CD8-positive, alpha-beta T cell (primary cell): ENCODE measurements at regions of chr21 and their contacts with region 1.

Region 1: GRCh38 chr21:15483138-15483780 is 246.5 kb upstream of the USP25 start:
- DNase-seq: peak; percentile 46 to 87 (median 79)
- ATAC-seq: peak; percentile 99
- H3K4me3 ChIP-seq: no peak overlapping the region
- H3K4me3 Mint-ChIP-seq: no peak overlapping the region
- H3K27ac ChIP-seq: no peak overlapping the region
- H3K27ac Mint-ChIP-seq: no peak overlapping the region
- H3K4me1 ChIP-seq: no peaks in the 10 kb centered on the region
- H3K4me1 Mint-ChIP-seq: peaks cover 15% of the 10 kb centered on the region
- H3K27me3 ChIP-seq: no peaks in the 10 kb centered on the region
- H3K27me3 Mint-ChIP-seq: no peaks in the 10 kb centered on the region
- CTCF ChIP-seq: peak; percentile 89

Region 2: DNA sequence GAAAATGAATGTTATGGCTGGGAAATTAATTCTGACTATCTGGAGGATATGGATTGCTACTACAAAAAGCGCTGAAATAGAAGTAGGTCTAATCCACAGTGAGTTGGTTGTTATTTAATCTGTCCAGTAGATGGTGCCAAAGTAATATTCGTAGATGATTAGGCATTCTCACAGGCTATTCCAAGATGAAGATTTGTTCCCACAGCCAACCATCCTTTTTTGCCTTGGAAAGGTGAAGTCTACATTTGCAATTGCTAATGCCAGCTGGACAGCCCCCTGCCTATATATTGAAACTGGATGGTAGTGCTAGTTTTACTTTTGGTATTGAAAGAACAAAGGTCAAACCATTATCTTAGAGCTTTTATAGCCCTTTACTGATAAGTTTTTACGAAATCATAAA is 1223.5 kb before region 1 on chr21:
- CTCF ChIA-PET with region 1: no interaction called
- POLR2A ChIA-PET with region 1: no interaction called
- intact Hi-C with region 1: loop called (anchors 5 kb)
- DNase-seq: peak in 2 of 9 experiments; percentile 39 to 55
- ATAC-seq: peak; percentile 54
- H3K4me3 ChIP-seq: no peak overlapping the region
- H3K4me3 Mint-ChIP-seq: no peak overlapping the region
- H3K27ac ChIP-seq: no peak overlapping the region
- H3K27ac Mint-ChIP-seq: no peak overlapping the region
- H3K4me1 ChIP-seq: no peaks in the 10 kb centered on the region
- H3K4me1 Mint-ChIP-seq: no peaks in the 10 kb centered on the region
- H3K27me3 ChIP-seq: no peaks in the 10 kb centered on the region
- H3K27me3 Mint-ChIP-seq: no peaks in the 10 kb centered on the region
- CTCF ChIP-seq: peak; percentile 62

Region 3: GRCh38 chr21:14403681-14404318 is 1079.5 kb before region 1 on chr21:
- CTCF ChIA-PET with region 1: no interaction called
- POLR2A ChIA-PET with region 1: no interaction called
- intact Hi-C with region 1: loop called (anchors 1 kb)
- DNase-seq: peak in 2 of 9 experiments; percentile 54 to 68
- ATAC-seq: peak; percentile 74
- H3K4me3 ChIP-seq: no peak overlapping the region
- H3K4me3 Mint-ChIP-seq: no peak overlapping the region
- H3K27ac ChIP-seq: no peak overlapping the region
- H3K27ac Mint-ChIP-seq: no peak overlapping the region
- H3K4me1 ChIP-seq: no peaks in the 10 kb centered on the region
- H3K4me1 Mint-ChIP-seq: no peaks in the 10 kb centered on the region
- H3K27me3 ChIP-seq: no peaks in the 10 kb centered on the region
- H3K27me3 Mint-ChIP-seq: no peaks in the 10 kb centered on the region
- CTCF ChIP-seq: peak; percentile 75

Region 4: GRCh38 chr21:14864211-14865021 is 618.8 kb before region 1 on chr21:
- CTCF ChIA-PET with region 1: interaction called, 5 read pairs
- POLR2A ChIA-PET with region 1: interaction called, 3 read pairs
- intact Hi-C with region 1: loop called (anchors 1 to 5 kb)
- DNase-seq: peak in 5 of 9 experiments; percentile 17 to 34 (median 24)
- ATAC-seq: no peak
- H3K4me3 ChIP-seq: no peak overlapping the region
- H3K4me3 Mint-ChIP-seq: no peak overlapping the region
- H3K27ac ChIP-seq: no peak overlapping the region
- H3K27ac Mint-ChIP-seq: no peak overlapping the region
- H3K4me1 ChIP-seq: no peaks in the 10 kb centered on the region
- H3K4me1 Mint-ChIP-seq: peaks cover 8% of the 10 kb centered on the region
- H3K27me3 ChIP-seq: no peaks in the 10 kb centered on the region
- H3K27me3 Mint-ChIP-seq: no peaks in the 10 kb centered on the region
- CTCF ChIP-seq: no peak

Region 5: DNA sequence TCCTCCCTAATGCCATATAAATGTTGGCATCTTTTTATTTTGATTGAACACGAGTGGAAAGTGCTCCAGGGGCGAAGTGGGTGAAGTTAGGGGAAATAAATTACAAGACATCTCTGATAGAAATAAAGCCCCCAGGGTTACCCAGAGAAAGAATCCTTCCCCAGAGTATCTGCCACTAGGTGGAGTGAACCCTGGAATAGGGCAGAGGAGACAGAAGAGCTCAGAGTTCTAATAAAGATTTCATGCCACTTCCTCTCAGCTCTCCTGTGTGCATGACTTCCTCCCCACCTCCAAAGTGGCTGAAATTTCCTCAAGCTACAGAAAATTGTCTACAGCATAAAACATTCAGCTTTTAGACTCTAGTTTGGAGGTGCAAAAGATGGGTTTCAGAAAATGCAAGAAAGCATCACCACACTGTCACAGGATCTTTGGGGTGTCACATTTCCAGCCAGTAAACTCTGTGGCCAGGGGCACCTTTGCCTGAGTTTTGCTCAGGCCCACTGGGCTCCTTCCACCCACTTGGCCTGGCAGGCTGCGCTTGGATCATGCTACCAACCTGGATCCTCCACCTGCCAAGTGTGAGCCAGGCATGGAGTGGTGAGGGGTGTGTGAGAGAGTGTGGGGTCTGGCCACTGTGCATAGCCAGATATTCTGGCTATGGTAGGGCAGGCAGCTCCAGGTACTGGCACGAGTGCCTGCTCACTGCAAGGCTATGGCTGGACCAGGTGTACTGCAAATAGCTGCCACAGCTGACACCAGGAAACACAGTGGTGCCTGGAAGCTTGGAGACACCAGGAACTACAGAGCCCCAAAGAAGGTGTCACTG is 37.8 kb after region 1 on chr21:
- CTCF ChIA-PET with region 1: interaction called, 17 read pairs
- POLR2A ChIA-PET with region 1: no interaction called
- intact Hi-C with region 1: no loop called
- DNase-seq: peak in 2 of 9 experiments; percentile 8 to 31
- ATAC-seq: peak; percentile 38
- H3K4me3 ChIP-seq: no peak overlapping the region
- H3K4me3 Mint-ChIP-seq: no peak overlapping the region
- H3K27ac ChIP-seq: no peak overlapping the region
- H3K27ac Mint-ChIP-seq: peak overlapping the region; percentile 25
- H3K4me1 ChIP-seq: peaks cover 11% of the 10 kb centered on the region
- H3K4me1 Mint-ChIP-seq: peaks cover 15% of the 10 kb centered on the region
- H3K27me3 ChIP-seq: no peaks in the 10 kb centered on the region
- H3K27me3 Mint-ChIP-seq: no peaks in the 10 kb centered on the region
- CTCF ChIP-seq: peak; percentile 26